ENCODE measurements at regions of chr12 and their contacts with region 1.

Region 1: GRCh38 chr12:70365648-70366518 is at the start of gene KCNMB4:
- DNase-seq: peak; percentile 59 to 84 (median 70)
- H3K4me3 ChIP-seq: peak within 1 kb of the TSS; percentile 24 to 82 (median 44)
- H3K27ac ChIP-seq: peak within 1 kb of the TSS in 3 of 5 donors; percentile 8 to 53 (median 33)
- H3K4me1 ChIP-seq: peaks cover 0 to 21% of the 10 kb centered on the region in 2 donors
- H3K27me3 ChIP-seq: no peaks in the 10 kb centered on the region
- CTCF ChIP-seq: no peak
- POLR2A ChIP-seq: no peak
- total RNA-seq, gene KCNMB4: 2.2 to 23.3 (median 9.1) TPM

Region 2: DNA sequence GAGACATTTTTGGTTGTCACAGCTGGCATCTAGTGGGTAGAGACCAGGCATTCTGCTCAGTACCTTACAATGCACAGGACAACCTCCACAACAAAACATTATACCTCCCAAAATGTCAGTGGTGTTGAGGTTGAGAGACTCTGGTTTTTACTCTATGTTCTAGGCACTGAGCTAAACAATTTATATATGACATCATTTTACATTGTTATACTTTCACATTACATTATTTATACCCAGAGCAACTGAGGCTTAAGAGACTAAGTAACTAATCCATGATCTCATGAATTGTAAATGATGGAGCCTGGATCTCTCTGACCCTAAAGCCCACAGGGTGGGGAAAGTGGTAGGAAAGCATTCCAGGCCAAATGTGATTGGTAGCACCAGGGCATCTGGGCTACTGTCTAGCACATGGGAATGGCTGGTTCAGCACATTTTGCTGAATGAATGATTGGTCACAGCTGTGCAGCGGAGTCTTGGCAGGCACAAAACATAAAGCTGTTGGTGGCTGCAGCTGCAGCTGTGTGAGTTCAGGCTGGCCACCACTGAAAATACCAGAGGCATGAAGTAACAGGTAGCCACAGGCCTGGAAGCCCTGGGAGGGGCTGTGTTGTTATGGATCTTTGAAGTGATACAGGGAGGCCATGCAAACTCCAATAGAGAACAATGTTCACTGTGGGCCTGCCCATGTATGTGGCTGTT is 468.3 kb before region 1 on chr12:
- intact Hi-C with region 1: loop called in 1 of 2 experiments (anchors 10 kb)
- DNase-seq: no peak
- H3K4me3 ChIP-seq: no peak overlapping the region
- H3K27ac ChIP-seq: no peak overlapping the region
- H3K4me1 ChIP-seq: peaks cover 0 to 5% of the 10 kb centered on the region in 2 donors
- H3K27me3 ChIP-seq: no peaks in the 10 kb centered on the region
- CTCF ChIP-seq: no peak
- POLR2A ChIP-seq: no peak

Measured in adrenal gland (tissue), 19 donors.